ENCODE measurements at regions of chr9 and their contacts with region 1.

Region 1: DNA sequence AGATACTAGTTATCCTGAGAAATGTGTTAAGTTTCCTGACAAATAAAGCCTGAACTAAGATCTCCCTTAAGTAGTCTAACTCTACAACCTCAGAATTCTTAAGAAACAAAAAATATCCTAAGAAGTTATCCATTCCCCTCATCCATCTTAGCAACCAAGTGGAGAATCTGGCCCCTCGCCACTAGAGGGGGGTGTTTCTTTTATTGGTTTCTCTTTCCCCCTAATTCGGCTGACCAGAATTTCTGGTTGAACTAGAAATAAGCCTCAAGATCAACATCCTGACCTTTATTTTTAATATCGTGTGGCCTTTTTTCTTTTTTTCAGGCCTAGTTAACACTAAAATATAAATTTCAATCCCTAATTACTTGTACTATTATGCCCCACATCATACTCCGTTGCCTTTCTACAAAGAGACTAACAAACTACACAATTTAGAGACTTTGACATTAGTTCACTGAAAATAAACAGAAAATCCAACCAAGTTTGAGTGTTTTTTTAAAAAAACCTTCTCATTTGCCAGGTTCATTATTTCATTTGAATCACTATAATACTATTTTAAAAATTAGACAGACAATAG is 14.3 kb upstream of the NR4A3 start:
- DNase-seq: peak; percentile 50
- ATAC-seq: peak; percentile 68
- H3K4me3 ChIP-seq: no peak overlapping the region
- H3K27ac ChIP-seq: no peak overlapping the region
- H3K4me1 ChIP-seq: no peaks in the 10 kb centered on the region
- H3K27me3 ChIP-seq: no peaks in the 10 kb centered on the region
- CTCF ChIP-seq: peak; percentile 67
- EP300 ChIP-seq: no peak
- POLR2A ChIP-seq: no peak
- RAD21 ChIP-seq: peak; percentile 28; the same call in 1 of the 2 replicates

Region 2: GRCh38 chr9:99266255-99267023 is 540.9 kb before region 1 on chr9:
- CTCF ChIA-PET with region 1: no interaction called
- POLR2A ChIA-PET with region 1: no interaction called
- in situ Hi-C with region 1: no loop called
- intact Hi-C with region 1: loop called (anchors 2 kb)
- DNase-seq: peak; percentile 65
- ATAC-seq: peak; percentile 91
- H3K4me3 ChIP-seq: peak overlapping the region in 1 of 3 experiments; percentile 36; a peak in 1 of 6 replicates
- H3K27ac ChIP-seq: no peak overlapping the region
- H3K4me1 ChIP-seq: peaks cover 12% of the 10 kb centered on the region
- H3K27me3 ChIP-seq: no peaks in the 10 kb centered on the region
- CTCF ChIP-seq: peak; percentile 96
- EP300 ChIP-seq: peak in 1 of 2 experiments; percentile 28; a peak in 1 of 4 replicates
- POLR2A ChIP-seq: no peak
- RAD21 ChIP-seq: peak; percentile 87